Dorsolateral prefrontal cortex (tissue), 120 donors: ENCODE measurements at regions of chr9 and their contacts with region 1.

Region 1: DNA sequence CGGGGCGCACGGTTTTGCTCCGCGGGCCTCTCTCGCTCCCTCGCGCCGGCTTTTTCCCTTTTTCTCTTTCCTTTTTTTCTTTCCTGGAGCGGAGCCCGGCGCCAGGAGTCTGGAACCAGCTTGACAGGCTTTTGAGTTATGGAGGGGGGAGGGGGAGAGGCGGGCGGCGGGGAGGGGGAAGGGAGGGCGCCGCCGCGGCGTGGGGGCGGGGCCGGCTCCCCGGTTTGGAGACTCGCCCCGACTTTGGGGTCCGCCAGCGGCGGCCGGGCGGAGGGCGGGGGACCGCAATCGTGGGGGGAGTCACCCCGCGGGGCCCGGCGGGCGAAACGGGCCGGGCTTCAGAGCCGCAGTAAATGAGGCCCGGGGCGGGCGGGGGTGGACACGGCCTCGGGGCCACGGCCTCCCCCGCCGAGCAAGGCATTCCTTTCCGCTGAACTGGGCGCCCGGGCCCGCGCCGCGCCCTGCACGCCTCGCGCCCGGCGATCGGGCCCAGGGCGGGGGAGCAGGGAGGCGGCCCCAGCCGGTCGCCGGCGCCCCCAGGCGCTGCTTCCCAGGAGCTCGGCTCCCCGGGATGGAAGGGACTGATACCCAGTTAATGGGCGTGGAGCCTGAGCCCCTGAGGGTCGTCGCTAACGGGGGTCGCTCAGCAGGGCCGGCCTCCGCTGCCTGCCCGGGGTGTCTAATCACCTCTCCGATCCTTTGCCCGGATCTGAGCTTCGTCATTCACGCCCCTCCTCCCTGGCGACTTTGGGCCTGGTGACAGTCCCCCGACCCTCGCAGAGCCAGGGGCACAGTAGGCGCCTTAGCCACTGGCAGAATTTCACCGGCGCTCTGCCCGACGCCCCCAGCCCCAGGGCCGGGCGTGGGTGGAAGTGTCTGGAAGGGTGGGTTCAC is 138.1 kb downstream of the C9orf50 start:
- DNase-seq: peak in 9 of 10 donors; percentile 54 to 81 (median 77)
- H3K4me3 ChIP-seq: peak overlapping the region; percentile 43 to 78 (median 63)
- H3K27ac ChIP-seq: peak overlapping the region; percentile 74 to 100 (median 99)
- H3K27me3 ChIP-seq: no peaks in the 10 kb centered on the region
- CTCF ChIP-seq: peak in 13 of 56 donors; percentile 4 to 48 (median 16)

Region 2: DNA sequence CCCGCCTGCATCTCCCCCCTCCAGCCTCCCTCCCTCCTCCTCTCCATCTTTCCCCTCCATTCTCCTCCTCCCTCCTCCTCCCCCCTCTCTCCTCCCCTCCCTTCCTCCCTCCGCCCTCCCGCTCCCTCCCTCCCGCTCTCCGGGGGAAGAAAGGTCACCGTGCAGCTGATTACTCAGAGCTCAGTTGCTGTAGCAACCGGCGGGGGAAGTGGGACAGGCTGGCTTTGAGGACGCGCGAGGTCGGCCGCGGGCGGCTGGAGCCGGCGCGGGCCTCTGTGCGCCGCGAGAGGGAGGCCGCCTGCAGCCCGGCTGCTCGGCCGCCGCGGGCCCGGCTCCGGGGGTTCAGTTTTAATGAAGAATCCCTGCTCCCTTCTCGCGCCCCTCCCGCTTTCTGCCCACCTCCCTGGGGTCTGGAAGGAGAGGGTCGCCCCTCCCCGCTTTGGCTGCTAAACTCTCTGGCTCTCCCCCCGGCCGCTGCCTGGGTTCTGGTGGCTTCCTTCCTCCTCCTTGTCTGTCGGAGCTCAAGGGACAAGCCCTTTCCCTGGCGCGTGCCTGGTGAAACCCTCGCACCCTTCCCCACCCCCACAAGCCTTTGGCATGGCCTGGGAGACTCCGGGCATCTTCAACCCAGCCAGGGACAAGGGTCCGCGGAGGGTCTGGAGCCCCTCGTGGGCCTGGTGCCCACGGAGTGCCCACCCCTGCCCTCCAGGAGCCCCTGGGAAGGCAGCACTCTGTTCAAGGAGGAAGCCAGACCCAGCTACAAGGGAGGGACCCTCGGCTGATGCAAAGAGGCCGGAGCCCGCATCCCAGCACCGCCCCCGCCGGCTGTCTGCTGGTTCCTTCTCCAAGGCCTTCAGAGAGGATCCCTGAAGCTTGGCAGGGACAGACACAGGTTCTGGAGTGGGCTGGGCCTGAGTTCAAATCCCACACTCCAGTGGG is 22.2 kb before region 1 on chr9:
- intact Hi-C with region 1: loop called (anchors 1 to 2 kb)
- DNase-seq: peak; percentile 90 to 98 (median 96)
- H3K4me3 ChIP-seq: peak overlapping the region; percentile 30 to 71 (median 55)
- H3K27ac ChIP-seq: peak overlapping the region; percentile 74 to 100 (median 99)
- H3K27me3 ChIP-seq: no peaks in the 10 kb centered on the region
- CTCF ChIP-seq: peak in 23 of 56 donors; percentile 8 to 58 (median 31)

Region 3: GRCh38 chr9:131020388-131020787 is 1537.6 kb after region 1 on chr9:
- intact Hi-C with region 1: no loop called
- DNase-seq: no peak
- H3K4me3 ChIP-seq: no peak overlapping the region
- H3K27ac ChIP-seq: peak overlapping the region in 9 of 59 donors; percentile 17 to 69 (median 35)
- H3K27me3 ChIP-seq: peaks cover 0 to 11% (median 0%) of the 10 kb centered on the region in 45 donors
- CTCF ChIP-seq: no peak